AG04449 (cell line): ENCODE measurements at regions of chr19 and their contacts with region 1.

Region 1: DNA sequence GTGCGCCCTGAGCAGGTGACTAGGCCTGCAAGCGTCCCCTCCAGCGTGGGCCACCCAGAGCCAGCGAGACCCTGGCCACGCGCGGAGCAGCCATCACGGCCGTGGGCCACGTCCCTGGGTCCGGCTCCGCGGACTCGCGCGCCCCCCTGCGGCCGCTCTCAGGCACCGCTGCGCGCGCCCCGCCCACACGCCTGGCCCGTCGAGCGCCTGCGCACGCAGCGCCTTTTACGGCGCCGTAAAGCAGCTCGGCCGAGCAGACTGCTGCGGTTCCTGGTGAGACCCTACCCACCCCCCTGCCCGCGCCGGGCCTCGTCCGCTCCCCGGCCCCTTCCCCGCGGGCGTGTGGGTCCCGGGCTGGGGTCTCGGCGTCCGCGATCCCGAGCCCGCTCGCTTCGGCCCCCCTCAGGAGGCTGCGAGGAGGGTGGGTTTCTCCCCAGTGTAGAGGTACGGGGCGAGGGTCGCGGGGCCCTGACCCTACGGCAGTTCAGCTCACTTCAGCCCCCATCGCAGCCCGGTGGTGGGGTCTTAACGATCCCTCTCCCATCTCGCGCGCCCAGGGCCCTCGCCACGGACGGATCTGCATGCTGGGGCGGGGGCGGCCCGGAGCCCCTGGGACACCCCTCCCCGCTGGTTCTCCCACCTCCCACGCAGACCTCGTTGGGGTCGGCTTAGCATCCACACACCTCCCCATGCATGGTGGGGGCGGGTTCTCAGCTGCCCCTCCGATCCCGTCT is at the start of gene TRAPPC5:
- DNase-seq: no peak
- H3K4me3 ChIP-seq: peak within 1 kb of the TSS; percentile 95
- CTCF ChIP-seq: peak; percentile 67

Region 2: GRCh38 chr19:7460562-7460966 is 220.2 kb before region 1 on chr19:
- CTCF ChIA-PET with region 1: no interaction called
- POLR2A ChIA-PET with region 1: no interaction called
- DNase-seq: no peak
- H3K4me3 ChIP-seq: no peak overlapping the region
- CTCF ChIP-seq: no peak

Region 3: GRCh38 chr19:7544626-7545025 is 136.1 kb before region 1 on chr19:
- CTCF ChIA-PET with region 1: no interaction called
- POLR2A ChIA-PET with region 1: no interaction called
- DNase-seq: no peak
- H3K4me3 ChIP-seq: no peak overlapping the region
- CTCF ChIP-seq: no peak

Region 4: GRCh38 chr19:7562646-7563393 is 118.0 kb before region 1 on chr19:
- CTCF ChIA-PET with region 1: interaction called, 59 read pairs
- POLR2A ChIA-PET with region 1: no interaction called
- DNase-seq: no peak
- H3K4me3 ChIP-seq: no peak overlapping the region
- CTCF ChIP-seq: no peak

Region 5: DNA sequence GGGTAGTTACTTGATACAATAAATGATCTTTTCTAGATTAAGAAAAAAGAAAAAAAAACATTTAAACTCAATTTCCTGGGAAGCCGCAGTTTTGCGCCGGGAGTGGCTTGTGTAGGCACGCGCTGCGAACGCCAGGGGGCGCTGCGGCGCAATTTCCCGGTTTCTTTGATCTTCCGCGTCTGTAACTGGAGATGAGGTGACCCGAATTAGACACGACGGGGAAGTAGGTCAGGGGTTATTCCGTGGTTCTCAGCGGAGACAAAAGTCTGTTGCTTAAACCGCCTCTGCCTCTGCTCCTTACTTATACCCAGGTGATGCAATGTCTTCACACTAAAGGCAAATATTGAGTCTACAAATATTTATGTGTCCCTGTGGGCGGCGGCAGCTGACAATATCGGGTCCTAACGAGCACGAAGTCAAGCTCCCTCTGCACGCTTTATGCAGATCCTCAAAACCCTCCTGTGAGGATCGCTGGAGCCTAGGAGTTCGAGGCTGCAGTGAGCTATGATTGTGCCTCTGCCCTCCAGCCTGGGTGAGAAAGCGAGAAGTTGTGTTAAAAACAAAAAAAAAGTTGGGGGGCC is 28.6 kb before region 1 on chr19:
- CTCF ChIA-PET with region 1: interaction called, 47 read pairs
- POLR2A ChIA-PET with region 1: no interaction called
- DNase-seq: no peak
- H3K4me3 ChIP-seq: peak overlapping the region; percentile 26
- CTCF ChIP-seq: peak; percentile 90

Region 6: DNA sequence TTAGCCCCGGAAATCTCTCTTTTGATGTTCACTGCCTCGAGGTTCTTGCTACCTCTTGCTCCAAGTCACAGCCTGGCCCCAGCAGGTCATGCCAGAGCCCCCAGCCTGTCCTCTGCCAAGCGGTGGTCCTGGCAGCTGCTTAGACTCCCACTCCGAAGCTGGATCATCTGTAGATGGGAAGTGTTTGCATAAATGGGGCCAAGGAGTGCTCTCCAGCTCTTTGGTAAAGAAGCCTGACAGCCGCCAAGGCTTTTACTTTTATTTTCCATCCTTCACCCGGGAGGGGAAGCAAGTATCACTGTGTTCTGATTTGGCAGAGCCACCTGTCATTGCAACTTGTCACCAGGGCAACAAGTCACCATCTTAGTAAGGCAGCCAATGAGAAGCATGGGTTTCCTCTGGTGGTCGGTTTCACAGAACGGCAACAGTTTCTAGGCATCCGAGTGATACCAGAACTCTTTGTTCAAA is 22.5 kb before region 1 on chr19:
- CTCF ChIA-PET with region 1: interaction called, 47 read pairs
- POLR2A ChIA-PET with region 1: no interaction called
- DNase-seq: no peak
- H3K4me3 ChIP-seq: no peak overlapping the region
- CTCF ChIP-seq: no peak

Region 7: GRCh38 chr19:7665076-7665475 is 15.7 kb before region 1 on chr19:
- CTCF ChIA-PET with region 1: interaction called, 47 read pairs
- POLR2A ChIA-PET with region 1: no interaction called
- DNase-seq: peak; percentile 37
- H3K4me3 ChIP-seq: no peak overlapping the region
- CTCF ChIP-seq: no peak

Region 8: GRCh38 chr19:7690779-7691258 is 10.0 kb after region 1 on chr19:
- CTCF ChIA-PET with region 1: interaction called, 14 read pairs
- POLR2A ChIA-PET with region 1: no interaction called
- DNase-seq: no peak
- H3K4me3 ChIP-seq: no peak overlapping the region
- CTCF ChIP-seq: no peak

Region 9: GRCh38 chr19:7698583-7698982 is 17.8 kb after region 1 on chr19:
- CTCF ChIA-PET with region 1: interaction called, 12 read pairs
- POLR2A ChIA-PET with region 1: no interaction called
- DNase-seq: no peak
- H3K4me3 ChIP-seq: no peak overlapping the region
- CTCF ChIP-seq: no peak

Region 10: DNA sequence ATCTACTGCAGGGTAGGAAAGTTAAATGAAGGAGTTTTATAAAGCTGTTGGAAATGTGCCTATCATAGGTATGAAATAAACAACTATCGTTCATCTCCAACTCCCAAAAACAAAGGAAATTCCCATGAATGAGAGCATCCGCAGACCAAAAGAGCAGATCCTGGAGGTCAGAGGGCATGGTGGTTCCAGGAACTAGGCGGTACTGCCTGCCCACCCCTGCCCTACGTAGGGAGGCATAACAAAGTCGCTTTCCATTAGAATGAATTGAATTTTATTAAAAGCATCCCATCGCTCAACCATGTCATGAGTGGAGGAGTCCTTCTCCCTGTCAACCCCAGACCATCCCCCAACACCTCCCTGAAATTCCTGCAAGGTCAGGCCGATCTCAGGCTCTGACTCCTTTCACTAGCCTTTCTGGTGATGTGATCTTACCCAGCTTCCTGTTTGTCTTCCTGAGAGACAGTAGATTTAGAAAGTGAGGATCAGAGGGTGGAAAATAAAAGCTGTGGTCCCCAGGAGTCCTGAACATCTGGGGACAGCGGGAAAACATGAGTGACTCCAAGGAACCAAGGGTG is 82.0 kb after region 1 on chr19 and contains the start of gene CLEC4M:
- CTCF ChIA-PET with region 1: no interaction called
- POLR2A ChIA-PET with region 1: no interaction called
- DNase-seq: no peak
- H3K4me3 ChIP-seq: no peak within 1 kb of the TSS
- CTCF ChIP-seq: no peak